CD4-positive, alpha-beta memory T cell (primary cell): ENCODE measurements at regions of chrX and their contacts with region 1.

Region 1: DNA sequence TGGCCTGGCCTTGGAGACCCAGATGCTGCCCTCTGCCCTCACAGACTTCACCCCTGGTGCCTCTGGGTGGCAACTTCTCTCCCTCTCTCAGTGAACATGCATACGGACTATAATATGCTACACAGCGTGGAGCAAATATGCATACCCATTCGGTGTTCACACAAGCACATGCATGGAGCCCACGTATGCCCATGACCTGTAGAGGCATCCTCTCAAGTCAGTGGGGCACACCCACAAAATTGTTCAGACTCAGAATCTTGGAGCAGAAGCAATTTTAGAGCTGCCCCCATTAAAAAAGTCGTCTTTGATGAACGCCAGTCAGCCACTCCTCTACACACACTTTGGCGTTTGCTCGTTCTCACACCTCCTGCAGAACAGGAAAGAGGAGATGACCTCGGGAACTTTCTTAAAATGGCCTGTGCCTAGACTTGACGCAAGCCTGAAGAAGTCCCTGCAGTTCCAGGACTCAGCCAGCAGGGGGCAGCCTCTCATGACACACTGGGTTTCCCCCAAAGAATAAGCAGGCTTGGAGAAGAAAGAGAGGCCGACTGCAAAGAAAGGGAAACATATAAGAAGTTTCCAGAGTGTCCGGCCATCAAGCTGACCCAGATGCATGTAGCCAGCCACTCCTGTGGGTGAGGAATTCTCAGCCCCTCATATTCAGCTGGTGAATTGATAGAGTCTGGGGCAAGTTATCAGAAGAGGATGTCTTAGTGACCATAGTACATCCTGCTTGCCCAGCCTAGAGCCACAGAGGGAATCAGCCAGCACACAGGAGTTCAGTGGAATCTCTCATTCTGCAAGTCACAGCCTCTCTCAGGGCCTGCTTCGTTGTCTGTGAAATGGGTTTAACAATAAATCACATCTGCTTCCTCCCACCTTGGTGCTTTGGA is 17.3 kb downstream of the APLN start:
- DNase-seq: peak; percentile 60 to 76 (median 65)
- H3K4me3 ChIP-seq: no peak overlapping the region
- H3K4me3 Mint-ChIP-seq: peak overlapping the region in 2 of 8 donors; percentile 0 to 35
- H3K27ac ChIP-seq: no peak overlapping the region
- H3K27ac Mint-ChIP-seq: peak overlapping the region in 1 of 7 donors; percentile 79
- H3K4me1 ChIP-seq: peaks cover 7% of the 10 kb centered on the region
- H3K4me1 Mint-ChIP-seq: peaks cover 0 to 12% (median 2%) of the 10 kb centered on the region in 4 donors
- H3K27me3 ChIP-seq: no peaks in the 10 kb centered on the region
- H3K27me3 Mint-ChIP-seq: no peaks in the 10 kb centered on the region

Region 2: DNA sequence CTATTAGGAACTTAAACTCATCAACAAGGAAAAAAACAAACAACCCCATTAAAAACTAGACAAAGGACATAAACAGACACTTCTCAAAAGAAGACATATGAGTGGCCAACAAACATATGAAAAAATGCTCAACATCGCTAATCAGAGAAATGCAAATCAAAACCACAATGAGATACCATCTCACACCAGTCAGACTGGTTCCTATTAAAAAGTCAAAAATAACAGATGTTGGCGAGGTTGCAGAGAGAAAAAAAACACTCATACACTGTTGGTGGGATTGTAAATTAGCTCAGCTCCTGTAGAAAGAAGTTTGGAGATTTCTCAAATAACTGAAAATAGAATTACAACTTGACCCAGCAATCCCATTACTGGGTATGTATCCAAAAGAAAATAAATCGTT is 11.4 kb before region 1 on chrX:
- CTCF ChIA-PET with region 1: interaction called, 19 read pairs
- POLR2A ChIA-PET with region 1: no interaction called
- intact Hi-C with region 1: no loop called
- DNase-seq: no peak
- H3K4me3 ChIP-seq: no peak overlapping the region
- H3K4me3 Mint-ChIP-seq: no peak overlapping the region
- H3K27ac ChIP-seq: no peak overlapping the region
- H3K27ac Mint-ChIP-seq: no peak overlapping the region
- H3K4me1 ChIP-seq: no peaks in the 10 kb centered on the region
- H3K4me1 Mint-ChIP-seq: peaks cover 5 to 10% (median 7%) of the 10 kb centered on the region in 4 donors
- H3K27me3 ChIP-seq: no peaks in the 10 kb centered on the region
- H3K27me3 Mint-ChIP-seq: peaks cover 0 to 2% of the 10 kb centered on the region in 2 donors

Region 3: GRCh38 chrX:129726307-129727111 is 89.0 kb after region 1 on chrX:
- CTCF ChIA-PET with region 1: interaction called, 12 read pairs
- POLR2A ChIA-PET with region 1: interaction called, 3 read pairs
- intact Hi-C with region 1: loop called (anchors 1 kb)
- DNase-seq: peak in 2 of 5 donors; percentile 18 to 24
- H3K4me3 ChIP-seq: no peak overlapping the region
- H3K4me3 Mint-ChIP-seq: no peak overlapping the region
- H3K27ac ChIP-seq: no peak overlapping the region
- H3K27ac Mint-ChIP-seq: peak overlapping the region in 2 of 7 donors; percentile 50 to 73
- H3K4me1 ChIP-seq: peaks cover 26% of the 10 kb centered on the region
- H3K4me1 Mint-ChIP-seq: peaks cover 27 to 46% (median 34%) of the 10 kb centered on the region in 4 donors
- H3K27me3 ChIP-seq: no peaks in the 10 kb centered on the region
- H3K27me3 Mint-ChIP-seq: no peaks in the 10 kb centered on the region

Region 4: GRCh38 chrX:129925305-129926092 is 288.0 kb after region 1 on chrX:
- CTCF ChIA-PET with region 1: interaction called, 11 read pairs
- POLR2A ChIA-PET with region 1: no interaction called
- intact Hi-C with region 1: loop called (anchors 1 kb)
- DNase-seq: peak; percentile 66 to 72 (median 68)
- H3K4me3 ChIP-seq: no peak overlapping the region
- H3K4me3 Mint-ChIP-seq: no peak overlapping the region
- H3K27ac ChIP-seq: no peak overlapping the region
- H3K27ac Mint-ChIP-seq: peak overlapping the region in 2 of 7 donors; percentile 5 to 52
- H3K4me1 ChIP-seq: no peaks in the 10 kb centered on the region
- H3K4me1 Mint-ChIP-seq: peaks cover 0 to 5% (median 2%) of the 10 kb centered on the region in 4 donors
- H3K27me3 ChIP-seq: no peaks in the 10 kb centered on the region
- H3K27me3 Mint-ChIP-seq: no peaks in the 10 kb centered on the region

Region 5: DNA sequence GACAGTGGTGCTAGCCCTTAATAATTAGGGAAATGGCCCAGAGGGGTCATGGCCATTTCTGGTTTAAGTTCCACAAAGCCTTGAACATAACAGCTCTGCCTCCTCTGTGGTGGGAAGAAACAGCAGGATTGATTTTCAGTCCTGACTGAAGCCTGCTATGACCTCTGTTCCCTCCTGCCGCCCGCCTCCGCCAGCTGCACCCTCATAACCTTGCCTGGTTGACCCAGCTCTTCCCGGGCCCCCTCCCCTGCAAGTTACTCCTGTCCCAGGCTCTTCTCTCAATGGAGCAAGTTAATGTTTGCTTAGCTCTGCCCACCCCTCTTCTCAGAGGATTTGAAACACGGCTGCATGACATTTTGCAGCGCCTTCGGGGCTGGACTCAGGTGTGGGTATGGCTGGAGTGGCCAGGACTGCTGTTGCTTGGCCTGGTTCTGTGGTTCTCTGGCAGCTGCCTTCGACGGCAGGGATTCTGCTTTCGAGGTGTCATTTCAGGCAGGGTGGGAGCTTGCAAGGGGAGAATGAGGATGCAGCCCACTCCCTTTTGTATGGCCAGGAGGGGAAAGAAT is 372.3 kb after region 1 on chrX:
- CTCF ChIA-PET with region 1: no interaction called
- POLR2A ChIA-PET with region 1: no interaction called
- intact Hi-C with region 1: no loop called
- DNase-seq: no peak
- H3K4me3 ChIP-seq: no peak overlapping the region
- H3K4me3 Mint-ChIP-seq: no peak overlapping the region
- H3K27ac ChIP-seq: no peak overlapping the region
- H3K27ac Mint-ChIP-seq: no peak overlapping the region
- H3K4me1 ChIP-seq: no peaks in the 10 kb centered on the region
- H3K4me1 Mint-ChIP-seq: no peaks in the 10 kb centered on the region
- H3K27me3 ChIP-seq: no peaks in the 10 kb centered on the region
- H3K27me3 Mint-ChIP-seq: no peaks in the 10 kb centered on the region

Region 6: DNA sequence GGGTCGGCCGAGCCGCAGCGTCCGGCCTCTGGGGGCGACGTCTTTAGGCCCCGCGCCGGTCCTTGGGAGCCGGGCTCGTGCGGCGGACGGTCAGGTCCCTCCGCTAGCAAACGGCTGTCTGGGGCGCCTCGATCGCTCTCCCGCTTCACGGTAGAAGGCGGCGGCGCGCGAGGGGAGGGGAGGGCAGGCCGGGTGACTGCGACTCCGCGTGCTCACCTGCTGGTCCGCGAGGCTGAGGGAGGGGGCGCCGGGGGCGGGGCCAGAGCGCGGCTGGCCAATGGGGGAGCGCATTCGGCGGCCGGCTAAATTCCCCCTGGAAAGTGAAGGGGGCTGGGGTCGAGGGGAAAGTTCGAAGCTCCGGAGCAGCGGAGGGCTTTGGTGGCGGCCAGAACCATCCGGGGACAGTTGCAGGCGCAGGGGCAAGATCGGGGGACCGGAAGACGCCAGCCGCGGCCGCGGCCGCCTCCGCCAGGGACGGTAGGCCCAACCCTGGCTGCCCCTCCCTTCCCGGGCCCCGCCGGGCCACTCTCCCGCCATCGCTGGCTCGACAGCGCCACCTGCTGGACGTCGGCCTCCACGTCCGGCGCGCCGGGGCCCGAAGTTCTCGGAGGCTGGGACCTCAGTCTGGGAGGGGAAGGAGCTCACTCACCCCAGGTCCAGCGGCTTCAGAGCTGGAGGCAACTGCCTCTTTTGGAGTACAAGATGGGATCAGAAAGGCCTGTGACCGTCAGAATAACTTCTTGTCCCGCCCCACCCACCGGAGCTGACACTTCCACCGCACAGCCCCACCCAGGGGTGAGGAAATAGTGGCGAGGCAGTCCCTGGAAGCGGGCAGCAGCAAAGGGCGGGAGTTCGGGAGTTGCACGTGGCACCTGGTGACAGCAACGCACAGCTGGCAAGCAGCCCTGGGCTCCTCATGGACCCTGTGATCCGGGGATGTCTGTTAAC is 422.9 kb after region 1 on chrX:
- CTCF ChIA-PET with region 1: interaction called, 7 read pairs
- POLR2A ChIA-PET with region 1: no interaction called
- intact Hi-C with region 1: loop called (anchors 1 kb)
- DNase-seq: peak; percentile 71 to 79 (median 72)
- H3K4me3 ChIP-seq: peak overlapping the region in 1 of 2 donors; percentile 28
- H3K4me3 Mint-ChIP-seq: peak overlapping the region; percentile 65 to 82 (median 75)
- H3K27ac ChIP-seq: peak overlapping the region; percentile 39
- H3K27ac Mint-ChIP-seq: peak overlapping the region in 5 of 7 donors; percentile 27 to 70 (median 55)
- H3K4me1 ChIP-seq: peaks cover 7% of the 10 kb centered on the region
- H3K4me1 Mint-ChIP-seq: peaks cover 3 to 17% (median 11%) of the 10 kb centered on the region in 4 donors
- H3K27me3 ChIP-seq: no peaks in the 10 kb centered on the region
- H3K27me3 Mint-ChIP-seq: no peaks in the 10 kb centered on the region